Naive thymus-derived CD4-positive, alpha-beta T cell (primary cell): ENCODE measurements at regions of chr6 and their contacts with region 1.

Region 1: DNA sequence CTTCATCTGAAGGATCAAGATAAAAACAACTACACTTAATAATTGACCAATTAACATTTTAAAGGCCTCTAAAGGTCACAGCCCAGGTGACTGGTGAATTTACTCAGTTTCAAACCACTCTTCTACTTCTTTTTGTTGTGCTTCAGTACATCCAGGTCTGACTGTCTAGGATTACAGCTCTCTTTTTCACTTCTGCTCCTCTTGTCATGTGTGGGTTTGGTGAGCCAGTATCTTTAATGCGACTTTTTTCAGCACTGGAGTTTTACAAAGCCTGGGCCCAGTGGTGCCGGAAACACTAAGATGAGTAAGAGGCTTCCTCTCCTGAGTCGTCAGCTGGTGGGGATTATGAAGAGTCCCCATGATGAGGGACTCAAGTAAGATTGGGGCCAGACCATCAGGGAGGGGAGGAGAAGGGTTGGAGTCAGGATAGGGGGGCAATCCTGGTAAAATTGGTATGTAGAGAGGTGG is 27.0 kb downstream of the HECA start:
- DNase-seq: peak in 8 of 9 donors; percentile 59 to 78 (median 73)
- ATAC-seq: peak; percentile 64
- H3K4me3 ChIP-seq: peak overlapping the region; percentile 11
- H3K4me3 Mint-ChIP-seq: peak overlapping the region; percentile 79 to 88 (median 83)
- H3K27ac ChIP-seq: peak overlapping the region; percentile 75
- H3K27ac Mint-ChIP-seq: peak overlapping the region; percentile 86 to 98 (median 91)
- H3K4me1 ChIP-seq: peaks cover 81 to 85% of the 10 kb centered on the region in 2 donors
- H3K4me1 Mint-ChIP-seq: peaks cover 70 to 96% (median 86%) of the 10 kb centered on the region in 7 donors
- H3K27me3 ChIP-seq: no peaks in the 10 kb centered on the region
- H3K27me3 Mint-ChIP-seq: no peaks in the 10 kb centered on the region

Region 2: DNA sequence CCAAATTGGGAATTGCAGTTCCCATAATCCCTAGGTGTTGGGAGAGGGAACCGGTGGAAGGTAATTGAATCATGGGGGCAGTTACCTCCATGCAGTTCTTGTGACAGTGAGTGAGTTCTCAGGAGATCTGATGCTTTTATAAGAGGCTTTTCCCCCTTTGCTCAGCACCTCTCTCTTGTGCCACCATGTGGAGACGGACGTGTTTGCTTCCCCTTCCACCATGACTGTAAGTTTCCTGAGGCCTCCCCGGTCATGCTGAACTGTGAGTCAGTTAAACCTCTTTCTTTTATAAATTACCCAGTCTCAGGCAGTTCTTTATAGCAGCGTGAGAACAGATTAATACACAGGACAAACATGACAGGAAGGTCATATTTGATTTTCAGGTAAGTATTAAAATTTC is 52.3 kb before region 1 on chr6:
- CTCF ChIA-PET with region 1: interaction called, 6 read pairs
- POLR2A ChIA-PET with region 1: interaction called, 4 read pairs
- intact Hi-C with region 1: loop called in 1 of 2 experiments (anchors 1 kb)
- DNase-seq: peak in 2 of 9 donors; percentile 21 to 28
- ATAC-seq: no peak
- H3K4me3 ChIP-seq: no peak overlapping the region
- H3K4me3 Mint-ChIP-seq: peak overlapping the region in 2 of 10 donors; percentile 6 to 36
- H3K27ac ChIP-seq: no peak overlapping the region
- H3K27ac Mint-ChIP-seq: peak overlapping the region in 8 of 9 donors; percentile 38 to 94 (median 86)
- H3K4me1 ChIP-seq: peaks cover 36 to 48% of the 10 kb centered on the region in 2 donors
- H3K4me1 Mint-ChIP-seq: peaks cover 17 to 74% (median 59%) of the 10 kb centered on the region in 7 donors
- H3K27me3 ChIP-seq: no peaks in the 10 kb centered on the region
- H3K27me3 Mint-ChIP-seq: no peaks in the 10 kb centered on the region

Region 3: GRCh38 chr6:139146317-139146726 is 15.5 kb before region 1 on chr6:
- CTCF ChIA-PET with region 1: interaction called, 4 read pairs
- POLR2A ChIA-PET with region 1: interaction called, 214 read pairs
- intact Hi-C with region 1: loop called (anchors 1 to 2 kb)
- DNase-seq: no peak
- ATAC-seq: peak; percentile 31
- H3K4me3 ChIP-seq: peak overlapping the region; percentile 43
- H3K4me3 Mint-ChIP-seq: peak overlapping the region; percentile 68 to 85 (median 80)
- H3K27ac ChIP-seq: peak overlapping the region; percentile 4
- H3K27ac Mint-ChIP-seq: peak overlapping the region; percentile 37 to 91 (median 73)
- H3K4me1 ChIP-seq: peaks cover 80 to 89% of the 10 kb centered on the region in 2 donors
- H3K4me1 Mint-ChIP-seq: peaks cover 88 to 97% (median 94%) of the 10 kb centered on the region in 7 donors
- H3K27me3 ChIP-seq: no peaks in the 10 kb centered on the region
- H3K27me3 Mint-ChIP-seq: no peaks in the 10 kb centered on the region